ENCODE measurements at regions of chr12 and their contacts with region 1.

Region 1: GRCh38 chr12:107760809-107761501 is at the start of gene PRDM4:
- DNase-seq: peak; percentile 92
- H3K4me3 ChIP-seq: peak within 1 kb of the TSS; percentile 80 to 98 (median 82)
- H3K4me3 Mint-ChIP-seq: peak within 1 kb of the TSS; percentile 85 to 92
- H3K27ac ChIP-seq: peak within 1 kb of the TSS; percentile 55 to 84
- H3K27ac Mint-ChIP-seq: peak within 1 kb of the TSS; percentile 73 to 91 (median 86)
- H3K4me1 ChIP-seq: peaks cover 25 to 27% of the 10 kb centered on the region in 2 donors
- H3K4me1 Mint-ChIP-seq: peaks cover 28% of the 10 kb centered on the region
- H3K27me3 ChIP-seq: no peaks in the 10 kb centered on the region
- H3K27me3 Mint-ChIP-seq: peaks cover 0 to 9% (median 4%) of the 10 kb centered on the region in 3 donors
- CTCF ChIP-seq: peak; percentile 41
- polyA plus RNA-seq, gene PRDM4: 6.5 to 16.4 (median 7.0) TPM

Region 2: DNA sequence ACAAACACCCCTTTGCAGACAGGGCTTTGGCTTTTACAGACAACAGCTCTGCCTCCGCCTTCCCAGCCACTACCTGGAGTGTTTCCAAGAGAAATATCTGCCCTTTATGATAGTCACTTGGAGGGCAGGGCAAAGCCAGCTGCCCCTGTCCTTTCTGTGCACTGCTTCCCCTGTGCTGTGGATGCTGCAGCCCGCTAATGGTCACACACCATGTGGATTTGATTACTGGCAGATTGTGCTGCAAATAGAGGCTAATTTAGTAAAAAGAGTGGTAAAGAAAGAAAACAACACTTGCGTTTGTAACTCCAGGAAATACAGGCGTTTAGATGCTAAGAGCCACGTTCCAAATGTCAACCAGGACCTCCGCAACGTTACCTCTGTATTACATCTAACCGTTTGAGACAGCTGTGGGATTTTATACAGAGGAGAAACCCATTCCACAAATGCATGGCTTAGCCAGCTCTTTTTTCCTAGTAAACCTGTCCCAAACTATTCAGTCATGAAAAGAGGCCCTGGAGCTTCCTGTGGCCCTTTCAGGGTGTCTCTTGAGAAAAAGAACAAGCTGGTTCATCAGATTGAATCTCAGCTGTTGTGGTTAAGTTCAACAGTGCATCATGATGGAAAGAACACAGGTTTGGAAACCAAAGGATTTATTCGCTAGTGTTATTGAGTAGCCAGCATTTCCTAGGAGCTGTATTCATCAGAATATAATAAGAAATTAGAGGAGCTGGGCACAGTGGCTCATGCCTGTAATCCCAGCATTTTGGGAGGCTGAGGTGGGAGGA is 105.5 kb before region 1 on chr12:
- intact Hi-C with region 1: no loop called
- DNase-seq: no peak
- H3K4me3 ChIP-seq: no peak overlapping the region
- H3K4me3 Mint-ChIP-seq: no peak overlapping the region
- H3K27ac ChIP-seq: no peak overlapping the region
- H3K27ac Mint-ChIP-seq: peak overlapping the region in 1 of 7 donors; percentile 72
- H3K4me1 ChIP-seq: peaks cover under 1 to 8% of the 10 kb centered on the region in 2 donors
- H3K4me1 Mint-ChIP-seq: peaks cover 6% of the 10 kb centered on the region
- H3K27me3 ChIP-seq: no peaks in the 10 kb centered on the region
- H3K27me3 Mint-ChIP-seq: no peaks in the 10 kb centered on the region
- CTCF ChIP-seq: no peak

Region 3: GRCh38 chr12:107685360-107686248 is 75.4 kb before region 1 on chr12 and contains the start of gene PWP1:
- intact Hi-C with region 1: loop called (anchors 5 kb)
- DNase-seq: peak; percentile 96 to 98 (median 96)
- H3K4me3 ChIP-seq: peak within 1 kb of the TSS; percentile 67 to 90 (median 87)
- H3K4me3 Mint-ChIP-seq: peak within 1 kb of the TSS; percentile 90 to 94
- H3K27ac ChIP-seq: peak within 1 kb of the TSS; percentile 65 to 96
- H3K27ac Mint-ChIP-seq: peak within 1 kb of the TSS; percentile 94 to 98 (median 95)
- H3K4me1 ChIP-seq: peaks cover 15 to 19% of the 10 kb centered on the region in 2 donors
- H3K4me1 Mint-ChIP-seq: peaks cover 16% of the 10 kb centered on the region
- H3K27me3 ChIP-seq: no peaks in the 10 kb centered on the region
- H3K27me3 Mint-ChIP-seq: peaks cover 0 to 2% (median 0%) of the 10 kb centered on the region in 3 donors
- CTCF ChIP-seq: no peak
- polyA plus RNA-seq, gene PWP1: 27.1 to 29.1 (median 28.0) TPM

Region 4: GRCh38 chr12:107875786-107876185 is 114.8 kb after region 1 on chr12:
- intact Hi-C with region 1: loop called (anchors 5 to 10 kb)
- DNase-seq: no peak
- H3K4me3 ChIP-seq: no peak overlapping the region
- H3K4me3 Mint-ChIP-seq: no peak overlapping the region
- H3K27ac ChIP-seq: no peak overlapping the region
- H3K27ac Mint-ChIP-seq: no peak overlapping the region
- H3K4me1 ChIP-seq: no peaks in the 10 kb centered on the region
- H3K4me1 Mint-ChIP-seq: peaks cover 5% of the 10 kb centered on the region
- H3K27me3 ChIP-seq: peaks cover 0 to 7% of the 10 kb centered on the region in 2 donors
- H3K27me3 Mint-ChIP-seq: peaks cover 0 to 32% (median 3%) of the 10 kb centered on the region in 3 donors
- CTCF ChIP-seq: no peak

Region 5: DNA sequence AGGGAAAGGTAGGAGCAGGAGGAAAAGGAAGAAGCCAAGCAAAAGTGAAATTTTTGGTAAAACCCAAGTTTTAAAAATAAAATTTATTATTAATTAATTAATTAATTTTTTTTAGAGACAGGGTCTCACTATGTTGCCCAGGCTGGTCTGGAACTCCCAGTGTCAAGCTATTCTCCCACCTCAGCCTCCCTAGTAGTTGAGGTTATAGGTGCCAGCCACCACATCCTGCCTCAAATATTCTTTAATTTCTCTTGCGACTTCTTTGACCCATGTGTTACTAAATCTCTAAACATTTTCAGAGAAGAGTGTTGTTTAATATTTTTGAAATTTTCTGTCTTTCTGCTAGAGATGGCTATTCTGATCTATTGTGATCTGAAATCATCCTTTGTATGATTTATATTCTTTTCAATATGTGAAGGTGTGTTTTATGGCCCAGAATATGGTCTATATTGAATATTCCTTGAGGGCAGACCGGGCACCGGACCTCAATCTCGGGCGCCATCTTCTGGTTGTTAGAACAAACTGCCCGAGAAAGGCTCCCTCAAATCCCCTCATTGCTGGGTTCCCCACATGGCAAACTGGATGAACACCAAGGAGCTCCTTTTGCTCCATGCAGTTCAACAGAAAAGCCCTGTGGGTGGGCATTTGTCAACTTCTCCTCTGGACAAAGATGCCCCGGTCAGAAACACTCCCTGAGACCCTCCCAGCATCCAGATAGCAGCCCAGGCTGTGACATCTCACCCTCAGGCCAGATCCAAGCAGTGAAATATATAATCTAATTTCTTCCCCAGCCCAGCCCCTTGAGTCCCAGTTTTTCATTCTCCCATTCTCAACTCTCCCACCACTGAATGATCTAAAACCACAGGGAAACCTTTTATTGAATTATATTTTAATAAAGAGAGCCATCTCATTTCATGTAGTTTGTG is 124.1 kb after region 1 on chr12:
- intact Hi-C with region 1: loop called in 1 of 2 experiments (anchors 10 kb)
- DNase-seq: peak; percentile 44 to 64 (median 58)
- H3K4me3 ChIP-seq: no peak overlapping the region
- H3K4me3 Mint-ChIP-seq: no peak overlapping the region
- H3K27ac ChIP-seq: no peak overlapping the region
- H3K27ac Mint-ChIP-seq: no peak overlapping the region
- H3K4me1 ChIP-seq: no peaks in the 10 kb centered on the region
- H3K4me1 Mint-ChIP-seq: no peaks in the 10 kb centered on the region
- H3K27me3 ChIP-seq: peaks cover 0 to 2% of the 10 kb centered on the region in 2 donors
- H3K27me3 Mint-ChIP-seq: peaks cover 0 to 6% (median 5%) of the 10 kb centered on the region in 3 donors
- CTCF ChIP-seq: peak; percentile 75